Body of pancreas (tissue), 4 donors: ENCODE measurements at regions of chr11 and their contacts with region 1.

Region 1: DNA sequence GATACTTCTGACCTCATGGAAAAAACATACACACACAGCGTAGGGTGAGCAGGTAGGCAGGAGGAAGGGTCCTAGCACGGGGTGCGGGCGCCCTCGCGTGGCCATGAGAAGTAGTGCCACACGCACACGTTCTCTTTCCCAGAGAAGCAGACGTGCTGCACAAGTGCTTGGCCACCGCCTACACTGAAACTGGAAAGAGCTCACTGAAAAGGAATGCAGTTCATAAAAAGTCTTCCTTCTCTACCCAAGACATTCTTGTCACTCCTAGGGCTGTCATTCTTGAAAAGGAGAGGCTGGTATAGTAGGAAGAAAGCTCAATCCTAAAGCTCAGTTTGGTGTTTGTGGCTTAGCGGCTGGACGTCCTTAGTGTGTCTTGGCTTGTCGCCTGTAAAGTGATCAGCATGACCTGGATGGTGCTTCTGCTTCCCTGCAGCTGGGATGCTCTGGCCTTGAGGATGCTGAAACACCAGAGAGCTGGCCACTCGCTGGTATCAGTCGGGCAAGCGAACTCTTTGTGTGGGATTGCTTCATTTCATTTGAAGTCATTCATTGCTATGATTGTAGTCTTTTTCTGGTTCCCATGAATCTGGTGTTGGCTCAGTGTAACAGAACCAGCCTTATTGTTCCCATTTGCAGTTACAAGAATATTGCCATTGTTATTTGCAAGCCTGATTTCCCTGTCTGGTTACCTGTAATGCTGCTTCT is 303.8 kb downstream of the NTM start:
- DNase-seq: peak; percentile 62 to 72 (median 70)
- ATAC-seq: peak; percentile 81
- H3K4me3 ChIP-seq: no peak overlapping the region
- H3K27ac ChIP-seq: no peak overlapping the region
- H3K4me1 ChIP-seq: no peaks in the 10 kb centered on the region
- H3K27me3 ChIP-seq: no peaks in the 10 kb centered on the region
- CTCF ChIP-seq: peak; percentile 76 to 94 (median 88)
- POLR2A ChIP-seq: no peak

Region 2: DNA sequence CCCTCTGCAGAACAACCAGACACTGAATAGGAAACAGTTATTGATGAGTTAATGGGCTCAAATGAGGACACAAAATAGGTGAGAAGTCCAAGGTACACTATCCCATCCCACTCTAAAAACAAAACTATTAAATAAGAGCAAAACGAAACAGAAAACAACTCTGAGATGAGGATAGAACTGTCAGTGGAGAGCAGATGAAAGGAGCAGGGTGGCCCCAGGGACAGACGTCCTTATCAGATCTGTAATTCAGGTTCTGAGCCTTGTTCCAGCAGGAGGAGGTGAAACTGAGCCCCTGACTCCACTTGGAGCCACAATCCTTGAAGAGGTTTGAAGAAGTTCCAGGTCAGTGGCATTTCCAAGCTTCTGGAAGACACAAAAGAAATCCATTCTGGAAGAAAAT is 749.4 kb before region 1 on chr11:
- intact Hi-C with region 1: loop called (anchors 10 kb)
- DNase-seq: no peak
- ATAC-seq: no peak
- H3K4me3 ChIP-seq: no peak overlapping the region
- H3K27ac ChIP-seq: no peak overlapping the region
- H3K4me1 ChIP-seq: no peaks in the 10 kb centered on the region
- H3K27me3 ChIP-seq: no peaks in the 10 kb centered on the region
- CTCF ChIP-seq: no peak
- POLR2A ChIP-seq: no peak

Region 3: GRCh38 chr11:131064373-131064991 is 609.7 kb before region 1 on chr11:
- intact Hi-C with region 1: loop called (anchors 5 kb)
- DNase-seq: peak; percentile 40 to 62 (median 48)
- ATAC-seq: no peak
- H3K4me3 ChIP-seq: no peak overlapping the region
- H3K27ac ChIP-seq: no peak overlapping the region
- H3K4me1 ChIP-seq: no peaks in the 10 kb centered on the region
- H3K27me3 ChIP-seq: peaks cover 0 to 5% of the 10 kb centered on the region in 2 donors
- CTCF ChIP-seq: peak; percentile 63 to 75 (median 67)
- POLR2A ChIP-seq: no peak

Region 4: GRCh38 chr11:131773626-131774025 is 99.4 kb after region 1 on chr11:
- intact Hi-C with region 1: no loop called
- DNase-seq: no peak
- ATAC-seq: no peak
- H3K4me3 ChIP-seq: no peak overlapping the region
- H3K27ac ChIP-seq: no peak overlapping the region
- H3K4me1 ChIP-seq: no peaks in the 10 kb centered on the region
- H3K27me3 ChIP-seq: no peaks in the 10 kb centered on the region
- CTCF ChIP-seq: no peak
- POLR2A ChIP-seq: no peak